Head of caudate nucleus (tissue), 42 donors: ENCODE measurements at regions of chr9 and their contacts with region 1.

Region 1: GRCh38 chr9:96116275-96117064 is 185.5 kb downstream of the HSD17B3 start:
- DNase-seq: peak; percentile 83 to 97 (median 92)

Region 2: DNA sequence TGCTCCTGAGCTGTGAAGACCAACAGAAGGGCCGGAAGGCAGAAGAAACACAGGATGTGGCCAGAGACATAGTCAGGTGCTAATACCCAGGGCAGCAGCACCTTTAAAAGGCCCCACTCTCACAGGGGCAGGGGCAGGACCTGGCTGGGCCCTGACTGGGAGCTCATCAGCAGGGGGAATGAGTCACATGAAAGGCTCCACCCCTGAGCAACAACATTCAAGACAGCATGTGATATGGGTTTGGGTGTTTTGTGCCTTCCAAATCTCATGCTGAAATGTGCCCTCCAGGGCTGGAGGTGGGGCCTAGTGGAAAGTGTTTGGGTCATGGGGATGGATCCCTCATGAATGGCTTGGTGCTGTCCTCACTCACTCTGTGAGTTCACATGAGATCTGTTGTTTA is 59.3 kb before region 1 on chr9:
- intact Hi-C with region 1: loop called (anchors 10 kb)
- DNase-seq: no peak